ENCODE measurements at regions of chr9 and their contacts with region 1.

Region 1: DNA sequence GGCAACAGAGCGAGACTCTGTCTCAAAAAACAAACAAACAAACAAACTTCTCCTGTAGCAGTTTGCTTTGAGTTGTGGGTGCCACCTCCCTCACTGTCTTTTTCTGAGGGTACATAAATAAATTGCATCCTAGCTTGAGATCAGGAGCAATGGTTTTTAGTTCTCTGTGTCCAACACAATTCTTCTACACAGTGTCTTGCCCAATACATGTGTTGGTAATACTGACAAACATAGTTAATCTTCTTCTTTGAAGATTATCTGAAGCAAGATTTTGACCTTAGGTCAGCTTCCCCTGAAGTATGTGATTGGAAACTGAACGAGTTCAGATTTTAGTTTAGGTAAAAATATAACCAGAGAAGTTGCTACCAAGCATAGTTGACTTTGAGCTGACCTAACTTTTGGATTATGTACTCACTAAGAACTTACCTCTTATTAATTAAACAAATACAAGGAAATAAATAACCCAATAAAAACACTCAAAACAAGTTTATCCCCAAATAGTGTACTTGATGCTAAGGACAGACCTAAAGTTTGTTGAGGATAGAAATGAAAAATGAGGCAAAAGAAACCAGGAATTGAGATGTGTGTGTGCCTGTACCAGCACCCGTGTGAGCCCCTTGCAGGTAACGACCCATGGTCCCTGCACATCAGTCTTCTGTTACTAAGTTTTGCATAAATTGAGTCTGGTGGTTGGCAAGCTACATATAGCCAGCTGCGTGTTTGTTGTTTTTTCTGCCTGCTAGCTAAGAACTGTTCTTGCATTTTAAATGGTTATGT is 16.2 kb downstream of the TJP2 start:
- DNase-seq: no peak
- ATAC-seq: no peak
- H3K4me3 Mint-ChIP-seq: no peak overlapping the region
- H3K27ac Mint-ChIP-seq: no peak overlapping the region
- H3K4me1 Mint-ChIP-seq: peaks cover 7% of the 10 kb centered on the region
- H3K27me3 Mint-ChIP-seq: peaks cover 9% of the 10 kb centered on the region

Region 2: GRCh38 chr9:69027355-69028096 is 162.7 kb before region 1 on chr9:
- CTCF ChIA-PET with region 1: interaction called, 10 read pairs
- POLR2A ChIA-PET with region 1: no interaction called
- DNase-seq: peak; percentile 68
- ATAC-seq: peak; percentile 59
- H3K4me3 Mint-ChIP-seq: no peak overlapping the region
- H3K27ac Mint-ChIP-seq: no peak overlapping the region
- H3K4me1 Mint-ChIP-seq: peaks cover 53% of the 10 kb centered on the region
- H3K27me3 Mint-ChIP-seq: peaks cover 14% of the 10 kb centered on the region

Region 3: DNA sequence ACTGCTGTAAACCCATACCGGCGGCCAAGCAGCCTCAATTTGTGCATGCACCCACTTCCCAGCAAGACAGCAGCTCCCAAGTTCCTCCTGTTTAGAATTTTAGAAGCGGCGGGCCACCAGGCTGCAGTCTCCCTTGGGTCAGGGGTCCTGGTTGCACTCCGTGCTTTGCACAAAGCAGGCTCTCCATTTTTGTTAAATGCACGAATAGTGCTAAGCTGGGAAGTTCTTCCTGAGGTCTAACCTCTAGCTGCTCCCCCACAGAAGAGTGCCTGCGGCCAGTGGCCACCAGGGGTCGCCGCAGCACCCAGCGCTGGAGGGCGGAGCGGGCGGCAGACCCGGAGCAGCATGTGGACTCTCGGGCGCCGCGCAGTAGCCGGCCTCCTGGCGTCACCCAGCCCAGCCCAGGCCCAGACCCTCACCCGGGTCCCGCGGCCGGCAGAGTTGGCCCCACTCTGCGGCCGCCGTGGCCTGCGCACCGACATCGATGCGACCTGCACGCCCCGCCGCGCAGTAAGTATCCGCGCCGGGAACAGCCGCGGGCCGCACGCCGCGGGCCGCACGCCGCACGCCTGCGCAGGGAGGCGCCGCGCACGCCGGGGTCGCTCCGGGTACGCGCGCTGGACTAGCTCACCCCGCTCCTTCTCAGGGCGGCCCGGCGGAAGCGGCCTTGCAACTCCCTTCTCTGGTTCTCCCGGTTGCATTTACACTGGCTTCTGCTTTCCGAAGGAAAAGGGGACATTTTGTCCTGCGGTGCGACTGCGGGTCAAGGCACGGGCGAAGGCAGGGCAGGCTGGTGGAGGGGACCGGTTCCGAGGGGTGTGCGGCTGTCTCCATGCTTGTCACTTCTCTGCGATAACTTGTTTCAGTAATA is 154.6 kb before region 1 on chr9 and contains the start of gene FXN:
- CTCF ChIA-PET with region 1: interaction called, 18 read pairs
- POLR2A ChIA-PET with region 1: no interaction called
- DNase-seq: peak; percentile 84
- ATAC-seq: peak; percentile 95
- H3K4me3 Mint-ChIP-seq: peak within 1 kb of the TSS; percentile 93
- H3K27ac Mint-ChIP-seq: peak within 1 kb of the TSS; percentile 81
- H3K4me1 Mint-ChIP-seq: peaks cover 24% of the 10 kb centered on the region
- H3K27me3 Mint-ChIP-seq: peaks cover 2% of the 10 kb centered on the region
- total RNA-seq, gene FXN: 21.7 to 23.2 TPM

Region 4: DNA sequence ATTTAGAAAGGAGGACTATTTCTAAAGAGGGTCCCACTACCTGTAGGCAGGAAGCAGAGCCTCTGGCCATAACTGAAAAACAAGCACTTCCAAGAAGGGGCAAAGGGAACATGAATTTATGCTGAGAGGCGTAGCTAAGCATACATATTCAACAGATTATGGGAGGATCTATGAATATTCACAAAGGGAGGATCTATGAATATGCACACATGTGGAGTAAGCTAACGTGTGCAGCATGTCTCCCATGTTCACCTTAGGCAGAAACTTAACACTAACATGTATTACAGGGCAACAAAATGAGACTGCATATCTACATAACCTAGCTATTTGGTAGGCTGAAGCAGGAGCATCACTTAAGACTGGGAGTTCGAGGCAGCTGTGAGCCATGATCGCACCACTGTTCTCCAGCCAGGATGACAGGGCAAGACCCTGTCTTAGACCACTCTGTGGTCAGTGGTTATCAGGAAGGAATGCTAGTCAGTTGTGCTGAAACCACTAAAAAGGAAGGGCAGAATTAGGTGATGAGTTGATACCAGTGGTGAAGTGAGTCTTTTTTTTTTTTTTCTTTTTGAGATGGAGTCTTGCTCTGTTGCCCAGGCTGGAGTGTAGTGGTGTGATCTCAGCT is 134.0 kb before region 1 on chr9:
- CTCF ChIA-PET with region 1: interaction called, 160 read pairs
- POLR2A ChIA-PET with region 1: no interaction called
- DNase-seq: no peak
- ATAC-seq: no peak
- H3K4me3 Mint-ChIP-seq: no peak overlapping the region
- H3K27ac Mint-ChIP-seq: no peak overlapping the region
- H3K4me1 Mint-ChIP-seq: peaks cover 29% of the 10 kb centered on the region
- H3K27me3 Mint-ChIP-seq: no peaks in the 10 kb centered on the region

Region 5: GRCh38 chr9:69121828-69122548 is 68.3 kb before region 1 on chr9:
- CTCF ChIA-PET with region 1: interaction called, 15 read pairs
- POLR2A ChIA-PET with region 1: no interaction called
- DNase-seq: peak; percentile 52
- ATAC-seq: peak; percentile 70
- H3K4me3 Mint-ChIP-seq: peak overlapping the region; percentile 84
- H3K27ac Mint-ChIP-seq: peak overlapping the region; percentile 46
- H3K4me1 Mint-ChIP-seq: peaks cover 16% of the 10 kb centered on the region
- H3K27me3 Mint-ChIP-seq: peaks cover 9% of the 10 kb centered on the region

Region 6: GRCh38 chr9:69155341-69156030 is 34.8 kb before region 1 on chr9:
- CTCF ChIA-PET with region 1: interaction called, 24 read pairs
- POLR2A ChIA-PET with region 1: no interaction called
- DNase-seq: no peak
- ATAC-seq: no peak
- H3K4me3 Mint-ChIP-seq: no peak overlapping the region
- H3K27ac Mint-ChIP-seq: no peak overlapping the region
- H3K4me1 Mint-ChIP-seq: no peaks in the 10 kb centered on the region
- H3K27me3 Mint-ChIP-seq: no peaks in the 10 kb centered on the region

Region 7: GRCh38 chr9:69174616-69175463 is 15.4 kb before region 1 on chr9:
- CTCF ChIA-PET with region 1: interaction called, 77 read pairs
- POLR2A ChIA-PET with region 1: no interaction called
- DNase-seq: peak; percentile 23
- ATAC-seq: peak; percentile 23
- H3K4me3 Mint-ChIP-seq: peak overlapping the region; percentile 66
- H3K27ac Mint-ChIP-seq: no peak overlapping the region
- H3K4me1 Mint-ChIP-seq: peaks cover 31% of the 10 kb centered on the region
- H3K27me3 Mint-ChIP-seq: peaks cover 55% of the 10 kb centered on the region

Region 8: GRCh38 chr9:69211424-69212036 is 21.3 kb after region 1 on chr9:
- CTCF ChIA-PET with region 1: no interaction called
- POLR2A ChIA-PET with region 1: no interaction called
- DNase-seq: no peak
- ATAC-seq: no peak
- H3K4me3 Mint-ChIP-seq: no peak overlapping the region
- H3K27ac Mint-ChIP-seq: no peak overlapping the region
- H3K4me1 Mint-ChIP-seq: no peaks in the 10 kb centered on the region
- H3K27me3 Mint-ChIP-seq: no peaks in the 10 kb centered on the region

Region 9: GRCh38 chr9:69254223-69254622 is 63.9 kb after region 1 on chr9:
- CTCF ChIA-PET with region 1: no interaction called
- POLR2A ChIA-PET with region 1: no interaction called
- DNase-seq: no peak
- ATAC-seq: no peak
- H3K4me3 Mint-ChIP-seq: no peak overlapping the region
- H3K27ac Mint-ChIP-seq: no peak overlapping the region
- H3K4me1 Mint-ChIP-seq: no peaks in the 10 kb centered on the region
- H3K27me3 Mint-ChIP-seq: no peaks in the 10 kb centered on the region

Measured in activated CD8-positive, alpha-beta T cell treated with anti-CD3 and anti-CD28 coated beads, Interleukin-2, amount 10 ng/mL, durations not matched to agents 7 days and 5 days (primary cell).